ENCODE measurements at regions of chr21 and their contacts with region 1.

Region 1: DNA sequence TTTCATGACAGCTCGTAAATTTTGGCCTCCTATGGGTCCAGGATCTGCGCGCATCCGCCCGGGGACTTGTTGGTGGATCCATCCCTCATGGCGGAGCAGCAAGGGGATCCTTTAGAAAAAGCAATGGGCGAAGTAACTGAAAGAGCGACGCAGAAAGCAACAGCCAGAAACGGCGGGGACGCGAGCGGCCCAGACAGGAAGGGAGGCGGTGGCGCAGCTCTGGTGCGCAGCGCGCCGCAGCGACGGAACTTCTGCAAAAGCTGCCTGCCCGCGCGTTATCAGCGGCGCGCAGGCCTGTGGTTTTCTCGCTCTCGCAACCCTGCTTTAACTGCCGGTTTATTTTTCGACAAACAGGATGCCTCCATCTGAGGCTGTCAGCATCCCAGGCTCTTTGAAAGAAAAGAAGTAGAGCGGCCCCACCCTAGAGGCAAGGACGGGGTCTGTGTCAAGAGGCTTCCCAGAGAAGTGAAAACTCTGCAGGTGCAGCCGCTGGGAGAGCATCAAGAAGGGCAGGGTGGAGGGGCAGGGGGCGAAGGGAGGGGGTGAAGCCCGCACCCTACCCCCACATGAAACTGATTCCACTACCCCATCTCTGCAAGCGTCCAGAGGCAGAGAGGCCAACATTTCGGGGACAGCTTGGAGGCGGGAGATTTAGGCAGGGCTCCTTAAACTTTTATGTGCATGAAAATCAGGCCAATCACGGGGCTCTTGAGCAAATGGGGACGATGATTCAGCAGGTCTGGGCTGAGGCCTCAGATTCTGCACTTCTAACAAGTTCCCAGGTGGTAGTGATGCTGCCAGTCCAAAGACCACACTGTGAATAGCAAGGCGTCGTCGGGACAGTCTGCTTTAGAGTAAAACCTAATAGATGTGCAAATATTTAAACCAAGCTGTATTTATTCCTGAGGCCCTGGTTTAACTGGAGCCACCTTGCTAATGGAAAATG is 22.2 kb downstream of the RUNX1 start:
- DNase-seq: peak; percentile 74 to 93 (median 91)
- ATAC-seq: peak; percentile 93
- H3K4me3 ChIP-seq: peak overlapping the region; percentile 45
- H3K4me3 Mint-ChIP-seq: peak overlapping the region; percentile 77 to 98 (median 86)
- H3K27ac ChIP-seq: peak overlapping the region; percentile 75
- H3K27ac Mint-ChIP-seq: peak overlapping the region; percentile 96 to 100 (median 99)
- H3K4me1 ChIP-seq: peaks cover 69 to 85% of the 10 kb centered on the region in 2 donors
- H3K4me1 Mint-ChIP-seq: peaks cover 76 to 98% (median 93%) of the 10 kb centered on the region in 7 donors
- H3K27me3 ChIP-seq: no peaks in the 10 kb centered on the region
- H3K27me3 Mint-ChIP-seq: no peaks in the 10 kb centered on the region

Region 2: DNA sequence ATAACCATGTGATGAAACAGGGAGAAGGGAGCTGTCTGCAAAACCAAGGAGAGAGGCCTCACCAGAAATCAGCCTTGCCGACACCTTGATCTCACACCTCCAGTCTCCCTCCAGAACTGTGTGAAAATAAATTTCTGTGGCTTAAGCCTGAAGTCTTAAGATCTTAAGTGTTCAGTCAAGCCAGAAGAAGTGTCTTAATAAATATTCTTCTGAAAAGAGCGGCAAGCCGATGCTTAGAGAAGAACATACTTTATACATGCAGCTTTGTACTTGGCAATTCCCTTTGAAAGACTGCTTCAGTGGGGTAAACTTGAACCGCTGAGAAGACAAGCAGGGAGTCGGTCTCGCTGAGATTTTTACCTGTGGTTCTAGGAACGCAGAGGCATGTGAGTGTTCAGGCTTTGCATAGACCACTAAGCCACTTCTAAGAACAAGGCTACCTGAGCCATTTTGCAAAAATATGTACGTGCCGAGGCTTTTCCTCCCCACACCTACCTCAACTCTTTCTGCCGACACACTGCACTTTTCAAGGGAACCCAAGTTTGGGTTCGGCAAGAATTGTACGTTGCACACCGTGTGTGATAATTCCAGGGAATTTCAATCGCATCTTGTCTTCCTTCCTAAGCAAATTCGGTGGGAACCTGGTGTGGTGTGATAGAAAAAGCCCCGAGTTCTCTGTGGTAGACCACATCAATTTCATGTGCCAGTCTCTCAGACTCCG is 18.8 kb after region 1 on chr21:
- CTCF ChIA-PET with region 1: interaction called, 8 read pairs
- POLR2A ChIA-PET with region 1: interaction called, 110 read pairs
- intact Hi-C with region 1: loop called (anchors 1 kb)
- DNase-seq: peak in 7 of 9 donors; percentile 77 to 89 (median 85)
- ATAC-seq: peak; percentile 55
- H3K4me3 ChIP-seq: peak overlapping the region; percentile 76
- H3K4me3 Mint-ChIP-seq: peak overlapping the region; percentile 90 to 99 (median 97)
- H3K27ac ChIP-seq: peak overlapping the region; percentile 77
- H3K27ac Mint-ChIP-seq: peak overlapping the region; percentile 93 to 100 (median 98)
- H3K4me1 ChIP-seq: peaks cover 63 to 65% of the 10 kb centered on the region in 2 donors
- H3K4me1 Mint-ChIP-seq: peaks cover 58 to 90% (median 72%) of the 10 kb centered on the region in 7 donors
- H3K27me3 ChIP-seq: no peaks in the 10 kb centered on the region
- H3K27me3 Mint-ChIP-seq: peaks cover 0 to 3% (median 0%) of the 10 kb centered on the region in 5 donors

Measured in naive thymus-derived CD4-positive, alpha-beta T cell (primary cell).